WTC11 (cell line): ENCODE measurements at regions of chr3 and their contacts with region 1.

Region 1: DNA sequence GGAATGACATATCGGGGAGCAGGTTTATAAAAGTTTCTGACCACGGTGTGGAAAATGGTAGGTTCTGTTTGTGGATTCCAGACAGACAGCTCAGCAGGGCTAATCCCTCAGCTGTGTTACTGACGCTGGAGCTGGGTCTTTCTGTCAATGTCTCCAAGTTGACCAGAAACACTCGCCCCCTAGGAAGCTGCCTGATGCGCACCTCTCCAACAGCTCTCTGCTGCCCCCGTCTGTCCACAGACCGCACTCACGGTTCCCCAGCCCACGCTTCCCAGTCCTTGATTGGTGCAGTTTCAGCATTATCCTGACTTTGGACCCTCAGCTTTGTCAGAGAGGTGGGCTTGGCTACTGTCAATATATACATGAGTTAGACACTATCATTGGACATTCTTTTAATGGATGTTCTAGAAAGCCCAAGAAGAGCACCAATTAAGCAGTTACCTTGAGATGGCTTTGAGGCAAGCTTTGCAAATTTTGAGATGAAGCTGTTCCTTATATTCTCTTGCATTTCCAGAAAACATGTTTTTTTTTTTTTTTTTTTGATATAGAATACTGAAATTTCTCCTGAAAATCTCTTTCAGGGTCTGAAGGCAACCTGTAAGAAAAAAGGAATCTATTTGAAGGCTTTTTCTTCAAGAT is 98.9 kb upstream of the TBC1D5 start:
- DNase-seq: peak; percentile 90
- ATAC-seq: peak; percentile 97
- H3K4me3 Mint-ChIP-seq: no peak overlapping the region
- H3K27ac Mint-ChIP-seq: no peak overlapping the region
- H3K4me1 Mint-ChIP-seq: peaks cover 12% of the 10 kb centered on the region
- H3K27me3 Mint-ChIP-seq: no peaks in the 10 kb centered on the region
- CTCF ChIP-seq: peak; percentile 87

Region 2: DNA sequence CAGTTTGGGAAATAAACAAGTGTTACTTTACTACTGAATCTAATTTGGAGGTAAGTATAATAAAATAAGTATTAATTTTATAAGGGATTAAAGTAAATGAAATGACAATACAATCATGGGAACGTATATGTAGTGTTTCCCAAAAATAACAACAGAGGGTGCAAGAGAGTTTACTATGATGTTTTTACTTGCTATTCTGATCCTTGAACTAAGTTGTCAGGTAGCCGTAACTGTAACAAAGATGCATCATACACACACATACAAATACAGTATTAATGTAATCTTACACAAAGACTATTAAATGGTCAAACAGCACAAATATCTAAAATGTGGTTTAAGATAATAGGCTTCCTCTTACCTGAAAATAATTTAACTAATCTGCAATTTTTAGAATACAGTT is 410.3 kb before region 1 on chr3:
- CTCF ChIA-PET with region 1: interaction called, 23 read pairs
- POLR2A ChIA-PET with region 1: no interaction called
- DNase-seq: no peak
- ATAC-seq: peak; percentile 60; the same call in 1 of the 2 replicates
- H3K4me3 Mint-ChIP-seq: no peak overlapping the region
- H3K27ac Mint-ChIP-seq: no peak overlapping the region
- H3K4me1 Mint-ChIP-seq: peaks cover 18% of the 10 kb centered on the region
- H3K27me3 Mint-ChIP-seq: no peaks in the 10 kb centered on the region
- CTCF ChIP-seq: no peak

Region 3: GRCh38 chr3:17645072-17645698 is 196.1 kb before region 1 on chr3:
- CTCF ChIA-PET with region 1: interaction called, 56 read pairs
- POLR2A ChIA-PET with region 1: interaction called, 3 read pairs
- DNase-seq: no peak
- ATAC-seq: peak; percentile 62
- H3K4me3 Mint-ChIP-seq: no peak overlapping the region
- H3K27ac Mint-ChIP-seq: no peak overlapping the region
- H3K4me1 Mint-ChIP-seq: no peaks in the 10 kb centered on the region
- H3K27me3 Mint-ChIP-seq: no peaks in the 10 kb centered on the region
- CTCF ChIP-seq: peak; percentile 51

Region 4: DNA sequence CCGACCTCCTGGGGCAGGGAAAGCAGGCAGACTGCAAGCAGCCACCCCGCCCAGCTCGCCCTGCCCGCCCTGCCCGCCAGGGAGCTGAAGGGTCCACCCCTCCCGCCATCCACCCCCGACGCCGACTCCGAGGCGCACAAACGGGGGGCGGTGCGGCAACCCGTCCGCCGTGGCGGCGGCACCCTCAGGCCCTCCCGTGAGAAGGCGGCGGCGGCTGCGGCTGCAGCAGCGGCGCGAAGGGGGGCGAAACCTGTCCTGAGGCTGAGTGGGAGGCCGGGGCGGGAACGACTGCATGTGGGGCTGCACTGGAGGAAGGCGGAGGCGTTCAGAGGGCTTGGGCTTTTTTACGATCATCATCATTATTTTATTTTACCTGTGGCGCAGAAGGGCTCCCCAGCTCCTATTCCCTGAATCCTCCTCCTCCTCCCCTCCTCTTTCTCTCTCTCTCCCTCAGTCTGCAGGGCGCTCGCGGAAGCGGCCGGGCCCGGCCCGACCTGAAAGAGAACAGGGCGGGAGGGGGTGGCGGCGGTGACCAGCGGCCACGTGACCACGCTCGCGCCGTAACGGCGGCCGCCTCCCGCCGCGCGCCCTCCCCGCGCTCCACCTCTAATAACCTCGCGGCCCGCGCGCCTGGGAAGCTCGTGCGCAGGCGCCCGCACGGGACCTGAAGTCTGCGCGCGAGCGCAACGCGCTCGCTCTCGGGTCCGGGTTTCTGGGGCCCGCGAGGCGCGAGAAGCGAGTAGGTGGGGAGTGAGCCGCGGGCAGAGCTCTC is 99.0 kb before region 1 on chr3 and contains the start of gene TBC1D5:
- CTCF ChIA-PET with region 1: interaction called, 20 read pairs
- POLR2A ChIA-PET with region 1: interaction called, 6 read pairs
- DNase-seq: peak; percentile 94
- ATAC-seq: peak; percentile 87
- H3K4me3 Mint-ChIP-seq: peak within 1 kb of the TSS; percentile 85
- H3K27ac Mint-ChIP-seq: peak within 1 kb of the TSS; percentile 99
- H3K4me1 Mint-ChIP-seq: peaks cover 49% of the 10 kb centered on the region
- H3K27me3 Mint-ChIP-seq: no peaks in the 10 kb centered on the region
- CTCF ChIP-seq: no peak
- total RNA-seq, gene TBC1D5: 26.1 to 32.9 TPM (median 28.8 TPM) in 3 replicates

Region 5: GRCh38 chr3:17800232-17800631 is 41.1 kb before region 1 on chr3:
- CTCF ChIA-PET with region 1: interaction called, 17 read pairs
- POLR2A ChIA-PET with region 1: no interaction called
- DNase-seq: no peak
- ATAC-seq: no peak
- H3K4me3 Mint-ChIP-seq: no peak overlapping the region
- H3K27ac Mint-ChIP-seq: no peak overlapping the region
- H3K4me1 Mint-ChIP-seq: no peaks in the 10 kb centered on the region
- H3K27me3 Mint-ChIP-seq: no peaks in the 10 kb centered on the region; the same call in 1 of the 2 replicates
- CTCF ChIP-seq: no peak

Region 6: DNA sequence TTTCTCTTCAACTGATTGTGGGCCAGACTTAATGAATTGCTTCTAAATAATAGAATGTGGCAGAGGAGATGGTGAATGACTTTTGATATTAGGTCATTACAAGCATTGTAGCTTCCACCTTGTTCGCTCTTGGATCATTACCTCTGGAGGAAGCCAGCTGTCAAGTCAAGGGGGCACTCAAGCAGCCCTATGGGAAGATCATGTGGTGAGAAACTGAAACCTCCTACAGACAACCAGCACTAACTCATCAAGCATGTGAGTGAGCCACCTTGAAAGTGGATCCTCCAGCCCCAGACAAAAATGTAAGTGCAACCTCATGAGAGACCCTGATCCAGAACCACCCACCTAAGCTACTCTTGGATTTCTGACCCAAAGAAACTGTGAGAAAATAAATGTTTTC is 10.9 kb after region 1 on chr3:
- CTCF ChIA-PET with region 1: no interaction called
- POLR2A ChIA-PET with region 1: no interaction called
- DNase-seq: no peak
- ATAC-seq: no peak
- H3K4me3 Mint-ChIP-seq: no peak overlapping the region
- H3K27ac Mint-ChIP-seq: no peak overlapping the region
- H3K4me1 Mint-ChIP-seq: no peaks in the 10 kb centered on the region
- H3K27me3 Mint-ChIP-seq: no peaks in the 10 kb centered on the region
- CTCF ChIP-seq: no peak

Region 7: DNA sequence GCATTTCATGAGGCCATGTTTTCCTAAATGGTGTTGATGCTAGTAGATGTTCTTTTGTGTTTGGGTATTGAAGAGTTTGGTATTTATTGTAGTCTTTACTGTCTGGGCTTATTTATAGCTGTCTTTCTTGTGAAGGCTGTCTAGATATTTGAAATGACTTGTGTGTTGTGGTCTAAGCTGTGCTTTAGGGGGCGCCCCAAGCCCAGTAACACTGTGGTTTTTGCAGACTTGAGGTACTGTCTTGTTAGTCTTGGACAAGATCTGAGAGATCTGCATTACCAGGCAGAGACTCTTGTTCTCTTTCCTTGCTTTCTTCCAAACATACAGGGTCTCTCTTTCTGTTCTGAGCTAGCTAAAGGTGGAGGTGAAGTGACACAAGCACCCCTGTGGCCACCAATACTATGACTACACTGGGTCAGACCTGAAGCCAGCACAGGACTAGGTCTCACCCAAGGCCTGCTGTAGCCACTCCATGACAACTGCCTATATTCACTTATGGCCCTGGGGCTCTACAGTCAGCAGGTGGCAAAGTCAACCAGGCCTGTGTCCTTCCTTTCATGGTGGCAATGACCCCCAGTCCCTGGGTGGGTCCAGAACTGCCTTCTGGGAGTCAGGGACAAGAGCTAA is 53.2 kb after region 1 on chr3:
- CTCF ChIA-PET with region 1: interaction called, 15 read pairs
- POLR2A ChIA-PET with region 1: no interaction called
- DNase-seq: peak; percentile 75
- ATAC-seq: peak; percentile 97
- H3K4me3 Mint-ChIP-seq: no peak overlapping the region
- H3K27ac Mint-ChIP-seq: no peak overlapping the region
- H3K4me1 Mint-ChIP-seq: peaks cover 12% of the 10 kb centered on the region
- H3K27me3 Mint-ChIP-seq: no peaks in the 10 kb centered on the region
- CTCF ChIP-seq: peak; percentile 73

Region 8: GRCh38 chr3:18179521-18179920 is 338.2 kb after region 1 on chr3:
- CTCF ChIA-PET with region 1: no interaction called
- POLR2A ChIA-PET with region 1: no interaction called
- DNase-seq: no peak
- ATAC-seq: no peak
- H3K4me3 Mint-ChIP-seq: no peak overlapping the region
- H3K27ac Mint-ChIP-seq: no peak overlapping the region
- H3K4me1 Mint-ChIP-seq: no peaks in the 10 kb centered on the region
- H3K27me3 Mint-ChIP-seq: no peaks in the 10 kb centered on the region
- CTCF ChIP-seq: no peak